ENCODE measurements at regions of chrX and their contacts with region 1.

Region 1: GRCh38 chrX:43557792-43558191 is 98.3 kb upstream of the MAOA start:
- DNase-seq: peak in 4 of 5 donors; percentile 39 to 71 (median 62)
- H3K4me3 ChIP-seq: no peak overlapping the region
- H3K27ac ChIP-seq: no peak overlapping the region
- H3K4me1 ChIP-seq: no peaks in the 10 kb centered on the region
- H3K27me3 ChIP-seq: peaks cover 2% of the 10 kb centered on the region
- CTCF ChIP-seq: peak; percentile 69

Region 2: GRCh38 chrX:43373037-43373436 is 184.8 kb before region 1 on chrX:
- intact Hi-C with region 1: no loop called
- DNase-seq: no peak
- H3K4me3 ChIP-seq: no peak overlapping the region
- H3K27ac ChIP-seq: no peak overlapping the region
- H3K4me1 ChIP-seq: no peaks in the 10 kb centered on the region
- H3K27me3 ChIP-seq: no peaks in the 10 kb centered on the region
- CTCF ChIP-seq: no peak

Region 3: DNA sequence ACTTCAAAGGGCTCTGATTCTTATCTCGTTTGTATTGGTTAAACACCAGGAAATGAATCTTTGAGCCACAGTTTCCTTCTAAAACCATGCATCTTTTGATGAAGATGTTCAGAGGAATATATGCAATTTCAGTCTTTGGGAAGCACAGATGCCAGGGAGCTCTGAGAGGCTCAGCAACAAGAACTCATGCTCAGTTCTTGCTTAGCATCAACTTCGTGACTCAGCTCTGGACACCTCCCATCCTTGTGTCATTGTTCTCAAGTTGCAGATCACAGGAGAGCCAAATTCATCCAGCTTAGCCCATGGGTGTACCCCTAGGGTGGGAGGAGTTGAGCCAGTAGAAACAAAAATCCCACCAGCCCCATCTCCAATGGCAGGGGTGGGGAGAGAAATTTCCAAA is 121.3 kb before region 1 on chrX:
- intact Hi-C with region 1: no loop called
- DNase-seq: no peak
- H3K4me3 ChIP-seq: no peak overlapping the region
- H3K27ac ChIP-seq: no peak overlapping the region
- H3K4me1 ChIP-seq: no peaks in the 10 kb centered on the region
- H3K27me3 ChIP-seq: no peaks in the 10 kb centered on the region
- CTCF ChIP-seq: no peak

Region 4: DNA sequence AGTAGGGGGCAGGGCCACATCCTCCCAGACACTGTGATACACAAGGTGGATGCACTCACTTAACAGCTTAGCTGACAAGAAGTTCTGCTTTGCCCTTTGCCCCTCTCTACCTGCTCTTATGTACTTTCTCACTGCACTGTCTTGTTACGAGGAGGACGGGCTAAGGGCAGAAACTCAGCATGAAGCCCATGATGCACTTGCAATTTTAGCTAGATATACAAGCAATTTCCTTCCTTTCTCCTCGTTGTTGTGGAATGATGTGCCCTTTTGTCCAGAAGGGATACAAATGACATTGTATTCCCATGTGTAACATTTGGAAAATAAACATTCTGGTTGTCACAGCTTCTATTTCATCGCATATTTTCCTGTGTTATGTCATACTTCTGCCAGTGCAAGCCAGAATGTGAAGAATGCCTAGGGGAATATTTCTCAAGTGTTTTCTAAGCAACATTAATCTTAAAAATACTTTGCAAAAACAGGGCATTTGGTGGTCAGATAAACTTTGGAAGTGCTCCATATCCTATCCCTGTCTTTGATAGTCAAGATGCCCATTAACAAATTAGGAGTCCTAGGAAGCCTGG is 145.5 kb after region 1 on chrX:
- intact Hi-C with region 1: no loop called
- DNase-seq: peak in 2 of 5 donors; percentile 26 to 53
- H3K4me3 ChIP-seq: no peak overlapping the region
- H3K27ac ChIP-seq: peak overlapping the region; percentile 37 to 41
- H3K4me1 ChIP-seq: peaks cover 0 to 18% (median 4%) of the 10 kb centered on the region in 3 donors
- H3K27me3 ChIP-seq: peaks cover 2% of the 10 kb centered on the region
- CTCF ChIP-seq: no peak

Region 5: DNA sequence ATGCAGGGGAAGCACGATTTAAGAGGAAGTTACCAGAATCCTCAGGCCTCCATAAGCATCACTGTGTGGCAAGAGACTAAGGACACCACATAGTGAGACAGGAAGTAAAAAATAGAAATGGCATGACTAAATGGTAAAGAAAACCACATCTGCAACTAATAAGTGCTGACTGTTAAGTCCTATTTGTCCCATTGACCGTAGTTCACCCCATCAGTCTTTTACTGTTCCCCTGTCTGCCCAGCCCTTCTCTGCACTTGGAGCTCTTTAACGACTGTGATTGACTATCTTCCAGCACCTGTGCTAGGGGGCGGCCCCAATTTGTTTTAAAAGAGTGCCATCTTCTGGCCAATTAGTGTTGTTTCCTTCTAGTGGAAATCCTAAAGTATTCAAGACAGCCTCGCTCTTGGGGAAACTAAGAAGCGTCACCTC is 192.5 kb after region 1 on chrX:
- intact Hi-C with region 1: loop called (anchors 10 kb)
- DNase-seq: peak in 4 of 5 donors; percentile 42 to 79 (median 60)
- H3K4me3 ChIP-seq: no peak overlapping the region
- H3K27ac ChIP-seq: no peak overlapping the region
- H3K4me1 ChIP-seq: peaks cover 0 to 2% (median 0%) of the 10 kb centered on the region in 3 donors
- H3K27me3 ChIP-seq: peaks cover 6% of the 10 kb centered on the region
- CTCF ChIP-seq: peak; percentile 53

Measured in kidney (tissue), 22 donors.